ENCODE measurements at regions of chr4 and their contacts with region 1.

Region 1: GRCh38 chr4:55546756-55547465 is at the start of gene CLOCK:
- DNase-seq: peak; percentile 89
- H3K4me3 ChIP-seq: peak within 1 kb of the TSS; percentile 86 to 92 (median 88)
- H3K27ac ChIP-seq: peak within 1 kb of the TSS; percentile 67
- H3K4me1 ChIP-seq: peaks cover 11% of the 10 kb centered on the region
- H3K27me3 ChIP-seq: peaks cover 0 to 2% of the 10 kb centered on the region in 2 experiments
- CTCF ChIP-seq: peak; percentile 41 to 66
- POLR2A ChIP-seq: peak; percentile 44
- total RNA-seq, gene CLOCK: 22.2 and 23.8 TPM in 2 replicates

Region 2: GRCh38 chr4:55078987-55079386 is 467.9 kb before region 1 on chr4:
- CTCF ChIA-PET with region 1: no interaction called
- POLR2A ChIA-PET with region 1: interaction called, 3 read pairs
- dilution Hi-C with region 1: no loop called
- intact Hi-C with region 1: loop called (anchors 5 kb)
- DNase-seq: peak; percentile 92
- H3K4me3 ChIP-seq: peak overlapping the region in 1 of 3 experiments; percentile 28
- H3K27ac ChIP-seq: peak overlapping the region; percentile 99
- H3K4me1 ChIP-seq: peaks cover 48% of the 10 kb centered on the region
- H3K27me3 ChIP-seq: no peaks in the 10 kb centered on the region
- CTCF ChIP-seq: no peak
- POLR2A ChIP-seq: peak; percentile 79

Region 3: DNA sequence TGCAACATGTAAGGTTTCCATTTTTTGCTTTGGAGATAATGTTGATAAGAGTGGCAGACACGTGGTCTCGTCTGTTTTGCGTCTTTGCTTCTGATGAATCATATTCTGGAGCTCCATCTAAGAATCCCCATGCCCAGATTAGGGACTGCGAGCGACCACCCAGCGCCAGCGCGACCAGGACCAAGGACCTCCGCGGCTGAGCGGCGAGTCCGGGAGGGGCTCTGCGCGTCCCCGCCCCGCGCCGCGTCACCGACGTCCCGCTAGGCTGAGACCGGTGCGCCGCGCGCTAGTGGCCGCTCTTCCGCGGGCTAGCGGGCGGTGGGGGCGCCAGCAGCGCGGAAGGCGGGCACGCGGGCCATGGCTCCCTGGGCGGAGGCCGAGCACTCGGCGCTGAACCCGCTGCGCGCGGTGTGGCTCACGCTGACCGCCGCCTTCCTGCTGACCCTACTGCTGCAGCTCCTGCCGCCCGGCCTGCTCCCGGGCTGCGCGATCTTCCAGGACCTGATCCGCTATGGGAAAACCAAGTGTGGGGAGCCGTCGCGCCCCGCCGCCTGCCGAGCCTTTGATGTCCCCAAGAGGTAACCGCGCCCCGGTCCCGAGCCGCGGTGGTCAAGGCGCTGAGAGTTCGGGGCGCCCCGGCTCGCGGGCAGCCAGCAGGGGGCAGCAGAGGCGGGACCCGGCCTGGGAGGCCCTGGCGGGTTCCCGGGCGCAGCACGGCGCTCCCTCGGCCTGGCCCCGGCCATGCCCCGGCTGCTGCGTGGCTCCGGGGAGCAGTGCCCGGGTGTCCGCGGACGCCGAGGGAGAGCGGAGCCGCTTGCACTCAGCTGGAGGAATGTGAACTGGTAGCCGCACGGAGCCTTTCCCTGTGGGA is 200.7 kb before region 1 on chr4 and contains the start of gene SRD5A3:
- CTCF ChIA-PET with region 1: interaction called, 10 read pairs
- POLR2A ChIA-PET with region 1: no interaction called
- dilution Hi-C with region 1: no loop called
- intact Hi-C with region 1: loop called (anchors 2 kb)
- DNase-seq: peak; percentile 85
- H3K4me3 ChIP-seq: peak within 1 kb of the TSS; percentile 51 to 75 (median 65)
- H3K27ac ChIP-seq: peak within 1 kb of the TSS; percentile 69
- H3K4me1 ChIP-seq: peaks cover 11% of the 10 kb centered on the region
- H3K27me3 ChIP-seq: no peaks in the 10 kb centered on the region
- CTCF ChIP-seq: peak; percentile 84 to 92
- POLR2A ChIP-seq: peak; percentile 69
- total RNA-seq, gene SRD5A3: 24.3 and 30.4 TPM in 2 replicates

Region 4: DNA sequence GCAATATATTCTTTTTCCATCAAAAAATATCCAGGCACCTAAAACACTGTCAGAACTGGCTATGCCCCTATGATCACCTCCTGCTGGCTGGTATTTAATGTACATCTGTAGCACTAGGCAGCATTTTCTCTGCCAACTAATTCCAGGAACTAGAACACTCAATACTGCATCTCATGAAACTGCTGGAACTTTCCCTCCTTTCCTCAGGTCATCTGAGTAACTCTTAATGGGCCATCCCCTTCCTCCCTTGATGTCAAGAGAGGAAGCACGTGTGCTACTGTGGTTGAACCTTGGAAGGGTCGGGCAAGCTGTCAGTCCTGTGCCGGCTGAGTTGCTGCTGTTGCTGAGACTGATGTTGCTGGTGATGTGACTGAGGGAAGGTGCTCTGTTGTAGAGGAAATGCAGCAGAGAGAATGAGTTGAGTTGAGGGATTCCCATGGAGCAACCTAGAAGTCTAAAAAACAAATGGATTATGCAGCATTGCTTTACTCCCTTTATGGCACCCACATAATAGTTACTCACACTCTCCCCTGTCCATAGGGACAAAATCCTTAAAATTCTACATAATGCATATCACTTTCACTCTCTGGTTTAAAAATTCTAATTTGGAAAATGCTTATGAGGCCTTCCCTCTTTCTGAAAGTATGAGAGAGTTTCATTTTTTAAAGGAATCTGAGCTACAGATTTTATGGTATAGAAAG is 111.6 kb before region 1 on chr4:
- CTCF ChIA-PET with region 1: interaction called, 3 read pairs
- POLR2A ChIA-PET with region 1: no interaction called
- dilution Hi-C with region 1: no loop called
- intact Hi-C with region 1: loop called (anchors 2 kb)
- DNase-seq: peak; percentile 69
- H3K4me3 ChIP-seq: no peak overlapping the region
- H3K27ac ChIP-seq: no peak overlapping the region
- H3K4me1 ChIP-seq: peaks cover 13% of the 10 kb centered on the region
- H3K27me3 ChIP-seq: no peaks in the 10 kb centered on the region
- CTCF ChIP-seq: peak; percentile 24 to 30
- POLR2A ChIP-seq: no peak

Region 5: DNA sequence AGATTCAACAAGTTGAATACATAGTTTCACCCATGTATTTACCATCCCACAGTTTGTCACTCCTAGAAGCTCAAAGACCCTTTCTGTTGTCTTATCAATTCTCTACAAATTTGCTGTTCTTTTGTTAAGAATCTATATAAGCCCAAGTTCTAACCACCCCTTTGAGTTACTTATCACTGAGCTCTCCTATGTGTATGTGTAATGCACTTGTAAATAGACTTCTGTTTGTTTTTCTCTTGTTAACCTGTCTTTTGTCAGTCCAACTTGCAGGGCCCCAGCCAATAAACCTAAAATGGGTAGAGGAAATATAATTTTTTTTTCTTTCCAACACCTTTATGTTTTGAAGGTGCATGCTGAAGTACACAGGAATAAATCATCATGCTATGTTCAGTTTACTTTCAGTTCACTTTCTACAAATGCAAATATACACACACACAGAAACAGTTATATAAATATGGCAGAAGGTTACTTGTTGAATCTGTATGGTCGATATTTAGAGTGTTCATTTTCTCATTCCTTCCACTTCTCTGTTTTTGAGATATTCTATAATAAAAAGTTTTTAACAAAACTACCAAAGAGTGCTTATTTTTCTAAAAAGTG is 22.1 kb after region 1 on chr4:
- CTCF ChIA-PET with region 1: no interaction called
- POLR2A ChIA-PET with region 1: no interaction called
- dilution Hi-C with region 1: no loop called
- intact Hi-C with region 1: no loop called
- DNase-seq: no peak
- H3K4me3 ChIP-seq: no peak overlapping the region
- H3K27ac ChIP-seq: no peak overlapping the region
- H3K4me1 ChIP-seq: no peaks in the 10 kb centered on the region
- H3K27me3 ChIP-seq: peaks cover 4 to 5% of the 10 kb centered on the region in 2 experiments
- CTCF ChIP-seq: no peak
- POLR2A ChIP-seq: no peak

Region 6: GRCh38 chr4:55609393-55609866 is 62.5 kb after region 1 on chr4:
- CTCF ChIA-PET with region 1: no interaction called
- POLR2A ChIA-PET with region 1: no interaction called
- dilution Hi-C with region 1: no loop called
- intact Hi-C with region 1: no loop called
- DNase-seq: no peak
- H3K4me3 ChIP-seq: no peak overlapping the region
- H3K27ac ChIP-seq: no peak overlapping the region
- H3K4me1 ChIP-seq: no peaks in the 10 kb centered on the region
- H3K27me3 ChIP-seq: no peaks in the 10 kb centered on the region
- CTCF ChIP-seq: no peak
- POLR2A ChIP-seq: no peak

Region 7: DNA sequence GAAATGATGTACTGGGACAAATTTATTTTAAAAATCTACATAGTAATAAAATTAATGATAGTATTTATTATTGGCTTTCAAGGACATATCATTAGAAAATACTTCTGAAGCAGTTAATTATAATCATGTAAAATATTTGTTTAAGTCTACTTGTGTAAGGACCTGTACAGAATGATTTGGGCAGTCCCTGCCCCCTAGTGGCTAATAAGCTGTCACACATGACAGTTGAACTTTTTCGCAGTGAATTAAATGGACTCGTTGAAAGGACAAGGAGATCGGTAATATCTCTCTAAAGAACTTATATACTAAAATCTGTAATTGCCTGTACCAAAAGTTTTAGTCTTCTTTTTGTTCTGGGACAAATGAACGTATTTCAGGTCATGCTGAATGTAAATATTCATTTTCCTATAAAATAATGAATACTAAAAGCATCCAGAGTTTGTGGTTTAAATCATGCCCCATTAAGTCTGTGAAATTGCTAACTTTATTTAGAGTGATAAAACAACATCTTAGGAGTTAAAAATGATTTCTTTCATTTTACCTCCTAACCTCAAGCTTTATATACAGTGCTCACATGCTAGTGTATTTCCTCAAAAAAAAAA is 320.2 kb after region 1 on chr4:
- CTCF ChIA-PET with region 1: interaction called, 8 read pairs
- POLR2A ChIA-PET with region 1: no interaction called
- dilution Hi-C with region 1: no loop called
- intact Hi-C with region 1: loop called (anchors 2 kb)
- DNase-seq: peak; percentile 78
- H3K4me3 ChIP-seq: no peak overlapping the region
- H3K27ac ChIP-seq: peak overlapping the region; percentile 55
- H3K4me1 ChIP-seq: peaks cover 21% of the 10 kb centered on the region
- H3K27me3 ChIP-seq: no peaks in the 10 kb centered on the region
- CTCF ChIP-seq: peak; percentile 65 to 68
- POLR2A ChIP-seq: no peak